B cell (primary cell): ENCODE measurements at regions of chr7 and their contacts with region 1.

Region 1: DNA sequence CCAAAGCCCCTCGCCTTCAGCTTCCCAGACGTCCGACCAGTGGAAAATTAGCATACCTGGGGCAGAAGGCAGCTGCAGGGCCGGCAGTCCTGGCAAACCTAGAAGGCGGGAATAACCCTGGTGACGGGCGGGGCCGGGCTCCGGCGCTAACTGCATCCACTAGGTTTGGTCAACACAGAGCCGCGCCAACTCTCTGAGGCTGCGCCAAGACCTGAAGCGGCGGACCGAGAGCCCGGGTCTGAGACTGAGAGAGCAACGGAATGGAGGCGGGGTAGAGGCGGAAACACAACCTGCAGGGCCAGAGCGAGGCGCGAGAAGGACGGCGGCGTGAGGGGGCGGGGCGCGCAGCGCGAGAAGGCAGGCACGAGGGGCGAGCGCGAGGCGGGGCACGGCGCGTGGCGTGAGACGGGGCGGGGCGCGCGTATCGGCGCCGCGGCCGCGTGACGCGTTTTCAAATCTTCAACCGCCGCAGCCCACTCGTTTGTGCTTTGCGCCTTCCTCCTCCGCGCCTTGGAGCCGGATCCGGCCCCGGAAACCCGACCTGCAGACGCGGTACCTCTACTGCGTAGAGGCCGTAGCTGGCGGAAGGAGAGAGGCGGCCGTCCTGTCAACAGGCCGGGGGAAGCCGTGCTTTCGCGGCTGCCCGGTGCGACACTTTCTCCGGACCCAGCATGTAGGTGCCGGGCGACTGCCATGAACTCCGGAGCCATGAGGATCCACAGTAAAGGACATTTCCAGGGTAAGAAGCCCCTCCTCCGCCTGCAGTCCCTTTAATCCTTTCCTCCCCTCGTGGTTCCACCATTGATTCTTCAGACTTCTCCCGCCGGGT is at the starts of genes DBF4 and SLC25A40:
- DNase-seq: peak; percentile 98
- ATAC-seq: peak; percentile 92
- H3K4me3 ChIP-seq: peak within 1 kb of the TSS; percentile 73 to 98 (median 93)
- H3K4me3 Mint-ChIP-seq: peak within 1 kb of the TSS; percentile 76
- H3K27ac ChIP-seq: peak within 1 kb of the TSS; percentile 83 to 93
- H3K27ac Mint-ChIP-seq: peak within 1 kb of the TSS; percentile 98
- H3K4me1 ChIP-seq: peaks cover 18 to 24% of the 10 kb centered on the region in 2 donors
- H3K4me1 Mint-ChIP-seq: peaks cover 37% of the 10 kb centered on the region
- H3K27me3 ChIP-seq: no peaks in the 10 kb centered on the region
- H3K27me3 Mint-ChIP-seq: no peaks in the 10 kb centered on the region
- CTCF ChIP-seq: no peak
- total RNA-seq, gene DBF4: 21.0 and 27.6 TPM in 2 replicates
- total RNA-seq, gene SLC25A40: 28.1 and 34.5 TPM in 2 replicates

Region 2: GRCh38 chr7:87628780-87629569 is 247.3 kb before region 1 on chr7:
- CTCF ChIA-PET with region 1: no interaction called
- POLR2A ChIA-PET with region 1: no interaction called
- intact Hi-C with region 1: loop called (anchors 1 kb)
- DNase-seq: peak; percentile 66
- ATAC-seq: peak; percentile 18
- H3K4me3 ChIP-seq: peak overlapping the region in 4 of 5 experiments; percentile 59 to 80 (median 70)
- H3K4me3 Mint-ChIP-seq: peak overlapping the region; percentile 82
- H3K27ac ChIP-seq: no peak overlapping the region
- H3K27ac Mint-ChIP-seq: no peak overlapping the region
- H3K4me1 ChIP-seq: peaks cover 13 to 17% of the 10 kb centered on the region in 2 donors
- H3K4me1 Mint-ChIP-seq: peaks cover 17% of the 10 kb centered on the region
- H3K27me3 ChIP-seq: peaks cover 0 to 19% (median 8%) of the 10 kb centered on the region in 4 experiments
- H3K27me3 Mint-ChIP-seq: peaks cover 19% of the 10 kb centered on the region
- CTCF ChIP-seq: no peak

Region 3: GRCh38 chr7:87933945-87934698 is 57.9 kb after region 1 on chr7 and contains the start of gene ADAM22:
- CTCF ChIA-PET with region 1: no interaction called
- POLR2A ChIA-PET with region 1: interaction called, 4 read pairs
- intact Hi-C with region 1: loop called (anchors 1 kb)
- DNase-seq: peak; percentile 87
- ATAC-seq: peak; percentile 96
- H3K4me3 ChIP-seq: peak within 1 kb of the TSS; percentile 46 to 81 (median 64)
- H3K4me3 Mint-ChIP-seq: peak within 1 kb of the TSS; percentile 92
- H3K27ac ChIP-seq: no peak within 1 kb of the TSS
- H3K27ac Mint-ChIP-seq: peak within 1 kb of the TSS; percentile 84
- H3K4me1 ChIP-seq: peaks cover 8 to 16% of the 10 kb centered on the region in 2 donors
- H3K4me1 Mint-ChIP-seq: peaks cover 19% of the 10 kb centered on the region
- H3K27me3 ChIP-seq: peaks cover 0 to 14% (median 2%) of the 10 kb centered on the region in 4 experiments
- H3K27me3 Mint-ChIP-seq: peaks cover 12% of the 10 kb centered on the region
- CTCF ChIP-seq: no peak
- total RNA-seq, gene ADAM22: 1.8 and 2.0 TPM in 2 replicates

Region 4: GRCh38 chr7:88219781-88220747 is 343.8 kb after region 1 on chr7 and contains the start of gene SRI:
- CTCF ChIA-PET with region 1: no interaction called
- POLR2A ChIA-PET with region 1: no interaction called
- intact Hi-C with region 1: loop called (anchors 2 kb)
- DNase-seq: peak; percentile 94
- ATAC-seq: peak; percentile 96
- H3K4me3 ChIP-seq: peak within 1 kb of the TSS; percentile 83 to 91 (median 88)
- H3K4me3 Mint-ChIP-seq: peak within 1 kb of the TSS; percentile 94
- H3K27ac ChIP-seq: peak within 1 kb of the TSS; percentile 68 to 78
- H3K27ac Mint-ChIP-seq: peak within 1 kb of the TSS; percentile 95
- H3K4me1 ChIP-seq: peaks cover 13 to 25% of the 10 kb centered on the region in 2 donors
- H3K4me1 Mint-ChIP-seq: peaks cover 27% of the 10 kb centered on the region
- H3K27me3 ChIP-seq: no peaks in the 10 kb centered on the region
- H3K27me3 Mint-ChIP-seq: no peaks in the 10 kb centered on the region
- CTCF ChIP-seq: peak; percentile 98
- total RNA-seq, gene SRI: 46.9 and 49.9 TPM in 2 replicates